CD8-positive, alpha-beta memory T cell (primary cell): ENCODE measurements at regions of chr19 and their contacts with region 1.

Region 1: GRCh38 chr19:7919610-7920518 is at the start of gene SNAPC2:
- DNase-seq: peak; percentile 93 to 98 (median 97)
- H3K4me3 ChIP-seq: peak within 1 kb of the TSS; percentile 81
- H3K4me3 Mint-ChIP-seq: peak within 1 kb of the TSS; percentile 84 to 95 (median 86)
- H3K27ac ChIP-seq: peak within 1 kb of the TSS; percentile 68
- H3K27ac Mint-ChIP-seq: peak within 1 kb of the TSS; percentile 85 to 97 (median 92)
- H3K4me1 ChIP-seq: peaks cover 39% of the 10 kb centered on the region
- H3K4me1 Mint-ChIP-seq: peaks cover 26 to 63% (median 32%) of the 10 kb centered on the region in 3 donors
- H3K27me3 ChIP-seq: peaks cover 18% of the 10 kb centered on the region
- H3K27me3 Mint-ChIP-seq: peaks cover 25 to 29% of the 10 kb centered on the region in 2 donors
- total RNA-seq, gene SNAPC2: 17.4 to 18.2 TPM

Region 2: GRCh38 chr19:7888145-7888825 is 31.6 kb before region 1 on chr19 and contains the start of gene LRRC8E:
- CTCF ChIA-PET with region 1: no interaction called
- POLR2A ChIA-PET with region 1: no interaction called
- DNase-seq: no peak
- H3K4me3 ChIP-seq: no peak within 1 kb of the TSS
- H3K4me3 Mint-ChIP-seq: no peak within 1 kb of the TSS
- H3K27ac ChIP-seq: no peak within 1 kb of the TSS
- H3K27ac Mint-ChIP-seq: no peak within 1 kb of the TSS
- H3K4me1 ChIP-seq: no peaks in the 10 kb centered on the region
- H3K4me1 Mint-ChIP-seq: no peaks in the 10 kb centered on the region
- H3K27me3 ChIP-seq: no peaks in the 10 kb centered on the region
- H3K27me3 Mint-ChIP-seq: peaks cover 13 to 22% of the 10 kb centered on the region in 2 donors
- total RNA-seq, gene LRRC8E: not detected

Region 3: DNA sequence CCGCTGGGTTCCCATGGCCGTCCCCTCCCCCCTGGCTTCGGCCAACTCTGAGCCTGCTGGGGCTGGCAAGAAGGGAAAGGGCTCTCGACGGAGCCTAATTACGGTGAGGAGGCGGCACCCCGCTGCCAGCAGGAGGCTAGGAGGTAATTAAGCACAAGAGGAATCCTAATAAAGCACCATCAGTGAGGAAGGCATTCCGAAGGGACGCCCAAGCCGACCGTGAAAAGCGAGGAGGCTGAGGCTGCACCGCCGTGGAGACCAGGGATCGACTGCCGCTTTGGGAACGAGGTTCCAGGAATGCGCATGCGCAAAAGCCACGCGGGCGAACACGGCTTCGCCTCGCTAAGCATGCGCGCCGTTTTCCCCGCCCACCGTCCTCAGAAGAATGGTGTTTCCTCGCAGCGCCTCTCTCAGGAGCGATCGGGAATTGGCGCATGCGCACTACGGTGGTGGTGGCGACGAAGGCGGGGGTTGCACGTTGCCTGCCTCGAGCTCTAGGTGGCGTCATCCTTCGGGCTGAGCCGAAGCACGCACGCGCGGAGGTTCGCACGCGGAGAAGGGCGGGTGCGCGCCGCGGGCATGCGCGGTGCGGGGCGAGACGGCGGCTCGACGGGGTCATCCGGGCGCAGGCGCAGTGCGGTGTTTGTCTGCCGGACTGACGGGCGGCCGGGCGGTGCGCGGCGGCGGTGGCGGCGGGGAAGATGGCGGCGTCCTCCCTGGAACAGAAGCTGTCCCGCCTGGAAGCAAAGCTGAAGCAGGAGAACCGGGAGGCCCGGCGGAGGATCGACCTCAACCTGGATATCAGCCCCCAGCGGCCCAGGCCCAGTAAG is 16.4 kb before region 1 on chr19 and contains the start of gene MAP2K7:
- CTCF ChIA-PET with region 1: interaction called, 11 read pairs
- POLR2A ChIA-PET with region 1: interaction called, 31 read pairs
- DNase-seq: peak; percentile 100
- H3K4me3 ChIP-seq: peak within 1 kb of the TSS; percentile 86
- H3K4me3 Mint-ChIP-seq: peak within 1 kb of the TSS; percentile 85 to 98 (median 89)
- H3K27ac ChIP-seq: peak within 1 kb of the TSS; percentile 89
- H3K27ac Mint-ChIP-seq: peak within 1 kb of the TSS; percentile 94 to 100 (median 98)
- H3K4me1 ChIP-seq: peaks cover 35% of the 10 kb centered on the region
- H3K4me1 Mint-ChIP-seq: peaks cover 22 to 42% (median 28%) of the 10 kb centered on the region in 3 donors
- H3K27me3 ChIP-seq: no peaks in the 10 kb centered on the region
- H3K27me3 Mint-ChIP-seq: peaks cover 0 to 18% of the 10 kb centered on the region in 2 donors
- total RNA-seq, gene MAP2K7: 35.9 to 38.3 TPM